T-cell (primary cell): ENCODE measurements at regions of chr2 and their contacts with region 1.

Region 1: GRCh38 chr2:212777020-212777491 is 238.5 kb upstream of the ERBB4 start:
- DNase-seq: peak in 2 of 35 experiments; percentile 3 to 50
- ATAC-seq: peak in 3 of 4 experiments; percentile 36 to 52 (median 47)
- H3K4me3 ChIP-seq: no peak overlapping the region
- H3K4me3 Mint-ChIP-seq: no peak overlapping the region
- H3K27ac ChIP-seq: no peak overlapping the region
- H3K27ac Mint-ChIP-seq: no peak overlapping the region
- H3K4me1 ChIP-seq: peaks cover 0 to 7% of the 10 kb centered on the region in 2 experiments
- H3K4me1 Mint-ChIP-seq: peaks cover 3 to 5% (median 3%) of the 10 kb centered on the region in 3 donors
- H3K27me3 ChIP-seq: no peaks in the 10 kb centered on the region
- H3K27me3 Mint-ChIP-seq: no peaks in the 10 kb centered on the region

Region 2: GRCh38 chr2:212797484-212798205 is 20.6 kb after region 1 on chr2:
- CTCF ChIA-PET with region 1: no interaction called
- POLR2A ChIA-PET with region 1: no interaction called
- DNase-seq: no peak
- ATAC-seq: no peak
- H3K4me3 ChIP-seq: no peak overlapping the region
- H3K4me3 Mint-ChIP-seq: no peak overlapping the region
- H3K27ac ChIP-seq: no peak overlapping the region
- H3K27ac Mint-ChIP-seq: no peak overlapping the region
- H3K4me1 ChIP-seq: no peaks in the 10 kb centered on the region
- H3K4me1 Mint-ChIP-seq: no peaks in the 10 kb centered on the region
- H3K27me3 ChIP-seq: no peaks in the 10 kb centered on the region
- H3K27me3 Mint-ChIP-seq: no peaks in the 10 kb centered on the region

Region 3: DNA sequence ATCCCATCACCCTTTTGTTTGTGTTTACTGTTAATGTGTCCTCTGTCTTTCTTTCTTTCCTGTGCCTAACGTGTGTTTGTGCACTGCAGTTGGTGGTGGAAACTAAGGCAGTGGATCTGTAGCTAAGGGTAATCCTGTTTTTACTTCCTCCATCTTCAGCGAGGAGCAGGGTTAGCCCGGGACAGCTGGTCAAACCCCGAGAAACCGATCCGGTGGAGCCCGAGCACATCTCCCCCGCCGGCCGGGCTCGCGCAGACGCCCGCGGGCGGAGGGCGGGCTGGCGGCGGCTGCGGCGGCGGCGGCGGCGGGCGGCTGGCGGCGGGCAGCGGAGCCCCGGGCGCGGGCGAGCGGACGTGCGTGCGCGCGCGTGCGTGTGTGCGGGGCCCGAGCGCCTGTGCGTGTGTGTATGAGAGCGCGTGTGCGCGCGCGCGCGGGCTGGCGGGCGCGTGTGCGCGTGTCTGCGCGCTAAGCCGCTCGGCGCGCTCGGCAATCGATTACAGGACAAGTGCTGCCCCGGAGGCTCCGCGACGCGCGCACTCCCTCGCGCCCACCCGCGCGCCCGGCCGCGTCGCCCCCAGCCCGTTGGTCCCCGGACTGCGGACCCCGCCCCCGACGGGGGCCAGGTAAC is 374.5 kb after region 1 on chr2 and contains the start of gene IKZF2:
- CTCF ChIA-PET with region 1: interaction called, 10 to 18 read pairs
- POLR2A ChIA-PET with region 1: no interaction called
- DNase-seq: peak; percentile 43 to 93 (median 72)
- ATAC-seq: peak; percentile 74 to 79 (median 76)
- H3K4me3 ChIP-seq: peak within 1 kb of the TSS; percentile 72 to 89
- H3K4me3 Mint-ChIP-seq: peak within 1 kb of the TSS; percentile 89 to 91 (median 91)
- H3K27ac ChIP-seq: peak within 1 kb of the TSS; percentile 78
- H3K27ac Mint-ChIP-seq: peak within 1 kb of the TSS; percentile 87 to 92
- H3K4me1 ChIP-seq: peaks cover 4 to 28% of the 10 kb centered on the region in 2 experiments
- H3K4me1 Mint-ChIP-seq: peaks cover 39 to 46% (median 39%) of the 10 kb centered on the region in 3 donors
- H3K27me3 ChIP-seq: peaks cover 0 to 4% of the 10 kb centered on the region in 2 experiments
- H3K27me3 Mint-ChIP-seq: peaks cover 5 to 37% of the 10 kb centered on the region in 2 donors
- total RNA-seq, gene IKZF2: 23.4 to 64.1 (median 31.0) TPM